AG04449 (cell line): ENCODE measurements at regions of chr6 and their contacts with region 1.

Region 1: GRCh38 chr6:41683510-41684310 is 45.4 kb downstream of the MDFI start:
- DNase-seq: no peak
- H3K4me3 ChIP-seq: peak overlapping the region; percentile 38
- CTCF ChIP-seq: peak; percentile 97

Region 2: GRCh38 chr6:41392246-41392645 is 291.5 kb before region 1 on chr6:
- CTCF ChIA-PET with region 1: interaction called, 11 read pairs
- POLR2A ChIA-PET with region 1: no interaction called
- DNase-seq: no peak
- H3K4me3 ChIP-seq: no peak overlapping the region
- CTCF ChIP-seq: no peak

Region 3: GRCh38 chr6:41581381-41581991 is 102.2 kb before region 1 on chr6:
- CTCF ChIA-PET with region 1: interaction called, 22 read pairs
- POLR2A ChIA-PET with region 1: no interaction called
- DNase-seq: no peak
- H3K4me3 ChIP-seq: no peak overlapping the region
- CTCF ChIP-seq: no peak

Region 4: DNA sequence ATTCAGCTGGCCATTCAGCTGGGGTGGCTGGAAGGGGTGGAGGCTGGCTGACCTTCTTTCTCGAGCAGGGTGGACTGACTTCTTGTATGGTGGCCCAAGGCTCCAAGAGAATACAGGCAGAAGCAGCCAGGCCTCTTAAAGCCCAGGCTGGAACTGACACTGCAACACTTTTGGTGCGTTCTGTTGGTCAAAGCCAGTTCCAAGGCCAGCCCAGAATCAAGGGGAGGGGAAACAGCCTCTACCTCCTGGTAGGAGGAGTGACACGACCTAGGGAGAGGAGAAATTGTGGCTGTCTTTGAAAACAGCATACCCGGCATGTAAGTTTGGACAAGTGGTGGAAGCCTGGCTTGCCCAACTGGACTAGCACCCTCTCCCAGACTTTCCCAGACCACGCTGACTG is 65.6 kb before region 1 on chr6:
- CTCF ChIA-PET with region 1: interaction called, 16 read pairs
- POLR2A ChIA-PET with region 1: interaction called, 4 read pairs
- DNase-seq: no peak
- H3K4me3 ChIP-seq: no peak overlapping the region
- CTCF ChIP-seq: no peak

Region 5: DNA sequence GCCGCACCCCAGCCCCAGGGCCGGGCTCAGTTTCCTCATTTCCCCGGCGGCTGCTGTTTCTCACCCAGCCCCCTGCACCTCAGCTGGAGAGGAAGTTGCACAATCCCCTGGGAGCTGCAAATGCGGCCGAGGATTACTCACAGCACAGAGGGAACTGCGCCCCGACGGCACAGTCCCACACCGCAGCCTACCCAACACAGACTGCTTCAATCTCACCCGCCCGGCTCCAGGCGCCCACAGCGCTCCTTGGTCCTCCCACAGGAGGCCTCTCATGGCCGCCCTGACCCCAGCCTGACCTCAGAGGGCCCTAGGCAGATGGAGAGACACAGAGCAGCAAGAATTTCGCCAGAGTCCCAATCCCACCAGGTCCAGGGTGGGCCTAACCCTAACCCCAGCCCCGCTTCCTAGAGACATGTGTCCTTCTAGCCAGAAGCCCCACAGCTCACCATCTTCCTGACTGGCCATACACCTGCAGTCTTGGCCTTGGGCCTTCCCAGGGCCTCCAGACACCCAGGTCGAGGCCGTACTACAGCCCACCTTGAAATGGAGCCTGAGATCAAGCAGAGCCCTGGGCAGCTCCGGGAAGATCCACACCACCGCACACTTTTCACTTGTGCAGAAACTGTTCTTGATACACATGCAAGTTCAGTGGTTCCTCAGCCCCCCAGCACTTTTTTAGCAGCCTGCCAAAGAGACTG is 40.0 kb after region 1 on chr6:
- CTCF ChIA-PET with region 1: interaction called, 10 read pairs
- POLR2A ChIA-PET with region 1: no interaction called
- DNase-seq: peak; percentile 63
- H3K4me3 ChIP-seq: peak overlapping the region; percentile 44
- CTCF ChIP-seq: peak; percentile 7

Region 6: DNA sequence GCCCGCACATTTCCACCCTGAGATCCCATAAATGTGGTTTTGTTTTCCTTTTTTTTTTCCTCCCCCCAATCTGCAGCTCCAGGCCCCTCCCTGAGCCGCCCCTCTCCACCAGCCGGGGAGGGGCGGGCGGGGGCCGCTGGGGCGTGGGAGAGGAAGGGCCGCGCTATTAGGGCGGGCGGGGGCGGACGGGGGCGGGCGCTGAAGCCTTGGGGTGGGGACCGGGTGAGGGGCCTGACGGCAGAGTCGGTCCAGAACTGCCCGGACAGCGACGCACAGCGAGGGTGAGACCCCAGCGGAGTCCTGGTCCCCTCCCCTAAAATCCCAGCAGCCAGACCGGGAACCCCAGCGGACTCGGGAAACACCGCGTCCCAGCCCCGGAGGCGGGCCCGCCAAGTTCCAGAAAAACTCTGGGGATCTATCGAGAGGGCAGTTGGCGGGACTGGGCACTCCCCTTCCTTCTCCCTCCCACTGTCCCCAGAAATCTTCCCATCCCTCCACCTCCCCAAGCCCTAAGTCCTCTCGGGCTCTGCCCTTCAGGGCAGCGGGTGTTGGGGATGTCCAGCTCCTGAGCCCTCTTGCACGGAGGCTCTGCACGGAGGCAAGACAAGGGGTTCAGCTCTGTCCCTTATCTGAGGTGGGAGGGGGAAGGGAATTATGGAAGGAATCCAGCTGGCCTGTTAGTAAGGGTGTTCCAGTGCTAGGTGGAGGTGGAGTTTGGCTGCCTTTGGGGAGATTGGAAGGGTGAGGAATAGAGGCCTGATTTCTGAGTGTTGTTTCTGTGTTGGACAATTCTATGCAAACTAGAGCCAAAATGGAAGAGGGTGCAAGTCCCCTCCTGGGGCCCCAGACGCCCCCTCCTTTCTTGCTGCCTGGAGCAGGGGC is 97.1 kb after region 1 on chr6 and contains the start of gene PRICKLE4:
- CTCF ChIA-PET with region 1: interaction called, 48 read pairs
- POLR2A ChIA-PET with region 1: no interaction called
- DNase-seq: no peak
- H3K4me3 ChIP-seq: peak within 1 kb of the TSS; percentile 73
- CTCF ChIP-seq: no peak